Stomach (tissue), 19 donors: ENCODE measurements at regions of chr2 and their contacts with region 1.

Region 1: DNA sequence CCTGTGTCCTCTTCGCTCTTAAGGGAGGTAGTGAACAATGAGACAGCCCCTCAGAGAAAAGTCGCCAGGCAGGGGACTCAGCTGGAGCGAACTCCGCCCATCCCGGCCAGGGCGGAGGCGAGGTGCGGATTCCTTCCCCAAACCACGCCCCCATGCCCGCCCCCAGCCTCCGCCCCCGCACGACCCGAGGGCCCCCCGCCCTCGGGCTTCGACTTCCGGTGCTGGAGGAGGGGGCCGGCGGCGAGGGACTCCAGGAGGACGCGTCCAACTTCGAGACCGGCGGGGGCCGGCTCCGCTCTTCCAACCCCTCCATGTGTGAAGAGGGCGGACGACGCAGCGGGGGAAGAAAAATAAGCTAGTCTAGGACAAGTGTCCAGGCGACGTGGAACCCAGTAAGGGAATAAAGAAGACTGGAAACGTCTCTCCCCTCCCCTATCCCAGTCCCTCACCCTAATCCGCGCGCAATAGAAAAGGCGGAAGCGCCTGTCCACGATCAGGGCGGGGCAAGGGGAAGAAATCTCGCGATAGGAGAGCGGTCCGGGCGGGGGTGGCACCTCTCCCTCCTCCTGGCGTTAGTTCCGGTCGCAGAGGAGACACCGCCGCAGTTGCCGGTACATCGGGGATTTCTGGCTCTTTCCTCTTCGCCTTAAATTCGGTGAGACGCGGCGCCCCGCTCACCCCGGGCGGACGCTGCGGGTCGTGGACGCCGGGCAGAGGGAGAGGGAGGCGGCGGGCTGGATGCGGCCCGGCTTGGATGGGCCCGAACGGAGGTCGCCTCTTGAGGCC is at the start of gene BZW1:
- DNase-seq: peak; percentile 96 to 98
- H3K4me3 ChIP-seq: peak within 1 kb of the TSS; percentile 81 to 100 (median 94)
- H3K27ac ChIP-seq: peak within 1 kb of the TSS; percentile 99 to 100 (median 99)
- H3K4me1 ChIP-seq: peaks cover 21 to 54% (median 46%) of the 10 kb centered on the region in 4 donors
- H3K27me3 ChIP-seq: no peaks in the 10 kb centered on the region
- CTCF ChIP-seq: no peak
- EP300 ChIP-seq: no peak
- POLR2A ChIP-seq: peak in 2 of 4 donors; percentile 84 to 96
- total RNA-seq, gene BZW1: 32.4 to 530 (median 197) TPM

Region 2: DNA sequence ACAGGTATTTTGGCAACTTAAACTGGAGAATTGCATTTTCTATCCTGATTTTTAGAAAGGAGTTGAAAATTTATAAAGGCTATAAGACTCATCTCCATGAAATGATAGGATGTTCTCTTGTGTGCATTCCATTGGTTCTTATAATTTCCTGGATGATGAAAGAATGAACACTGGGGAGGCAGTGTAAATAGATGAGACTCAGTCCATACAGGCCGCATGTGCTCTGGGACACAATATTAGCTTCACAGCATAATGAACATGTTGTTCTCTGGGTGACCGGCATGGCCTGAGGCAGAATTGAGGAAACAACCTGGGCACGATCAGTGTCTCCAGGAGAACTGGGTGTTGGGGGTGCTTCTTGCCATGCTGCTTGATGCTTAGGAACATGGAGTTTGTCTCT is 186.9 kb before region 1 on chr2:
- intact Hi-C with region 1: no loop called
- DNase-seq: no peak
- H3K4me3 ChIP-seq: no peak overlapping the region
- H3K27ac ChIP-seq: no peak overlapping the region
- H3K4me1 ChIP-seq: no peaks in the 10 kb centered on the region
- H3K27me3 ChIP-seq: no peaks in the 10 kb centered on the region
- CTCF ChIP-seq: no peak
- EP300 ChIP-seq: no peak
- POLR2A ChIP-seq: no peak

Region 3: DNA sequence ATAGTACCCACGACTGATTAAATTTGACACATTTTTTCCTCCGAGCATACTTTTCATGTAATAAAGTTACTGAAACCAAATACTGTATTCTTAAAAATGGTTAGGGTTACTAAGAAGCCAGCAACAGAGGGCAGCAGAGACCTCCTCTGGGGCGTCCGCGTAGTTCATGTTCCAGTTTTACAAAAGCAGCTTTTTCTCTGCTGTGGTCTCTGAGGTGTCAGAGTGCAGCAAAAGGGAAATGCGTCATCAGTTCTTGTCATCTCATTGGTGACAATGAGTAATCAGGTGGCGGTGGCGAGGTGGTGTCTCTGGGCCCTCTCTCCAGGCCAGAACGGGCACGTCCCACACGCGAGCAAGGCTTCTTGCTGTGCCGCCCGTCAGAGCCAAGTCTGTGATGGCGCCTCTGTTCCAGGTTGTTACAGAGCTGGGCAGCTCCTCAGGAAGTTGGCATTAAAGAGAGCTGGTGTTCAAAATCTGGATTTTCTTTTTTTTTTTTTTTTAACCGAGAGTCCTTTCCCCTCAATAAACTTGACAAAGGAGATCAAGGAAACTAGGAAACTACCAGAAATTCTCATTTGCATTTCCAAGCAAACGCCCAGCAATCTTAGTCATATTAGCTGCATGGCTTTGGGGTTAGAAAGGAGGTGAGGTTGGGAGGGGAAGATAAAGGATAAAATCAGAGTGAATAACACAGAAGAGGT is 98.4 kb before region 1 on chr2:
- intact Hi-C with region 1: loop called (anchors 10 kb)
- DNase-seq: peak; percentile 86 to 96
- H3K4me3 ChIP-seq: peak overlapping the region; percentile 25 to 46 (median 40)
- H3K27ac ChIP-seq: peak overlapping the region; percentile 54 to 73 (median 67)
- H3K4me1 ChIP-seq: peaks cover 0 to 9% (median 5%) of the 10 kb centered on the region in 4 donors
- H3K27me3 ChIP-seq: no peaks in the 10 kb centered on the region
- CTCF ChIP-seq: peak in 5 of 7 experiments; percentile 47 to 83 (median 68)
- EP300 ChIP-seq: no peak
- POLR2A ChIP-seq: peak in 1 of 4 donors; percentile 27